A549 (cell line): ENCODE measurements at regions of chr11 and their contacts with region 1.

Region 1: GRCh38 chr11:118791111-118791965 is at the start of gene DDX6:
- DNase-seq: peak; percentile 62 to 81
- ATAC-seq: peak; percentile 79 to 81
- H3K4me3 ChIP-seq: peak within 1 kb of the TSS; percentile 69
- H3K27ac ChIP-seq: peak within 1 kb of the TSS; percentile 100
- H3K4me1 ChIP-seq: peaks cover 23% of the 10 kb centered on the region
- CTCF ChIP-seq: no peak; the same call in 2 of the 3 replicates
- EP300 ChIP-seq: no peak
- POLR2A ChIP-seq: peak; percentile 62
- RAD21 ChIP-seq: peak in 1 of 2 experiments; percentile 14; a peak in 1 of 5 replicates
- polyA plus RNA-seq, gene DDX6: 41.4 and 43.8 TPM in 2 replicates

Region 2: DNA sequence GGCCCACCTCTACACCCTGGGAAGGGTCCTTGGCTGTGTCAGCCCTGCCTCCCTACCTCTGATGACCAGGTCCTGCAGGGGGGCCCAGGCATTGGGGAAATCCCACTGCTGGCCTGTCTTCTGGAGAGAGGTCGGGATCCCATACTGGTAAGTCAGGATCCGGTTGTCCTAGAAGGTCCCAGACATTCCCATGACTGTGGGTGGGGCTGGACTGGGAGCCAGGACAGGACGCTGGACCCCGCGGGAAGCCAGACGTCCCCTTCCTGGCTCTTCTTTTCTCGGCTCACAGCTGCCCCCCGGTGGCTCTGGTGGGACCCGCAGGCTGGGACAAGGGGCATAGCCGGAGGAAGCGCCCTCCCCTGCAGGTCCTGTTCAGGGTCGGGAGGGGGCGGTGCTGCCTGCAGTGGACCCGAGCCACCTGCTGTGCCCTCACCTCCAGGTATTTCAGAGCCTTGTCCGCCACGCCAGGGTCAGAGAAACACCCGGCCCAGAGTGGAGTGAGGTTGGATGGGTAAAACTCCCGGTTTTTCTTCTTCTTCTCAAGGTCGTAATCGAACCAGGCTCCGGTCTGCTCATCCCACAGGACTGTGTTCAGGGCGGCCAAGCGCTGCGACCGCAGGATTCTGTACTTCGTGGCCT is 131.9 kb before region 1 on chr11:
- CTCF ChIA-PET with region 1: no interaction called
- POLR2A ChIA-PET with region 1: no interaction called
- DNase-seq: peak; percentile 75 to 87
- ATAC-seq: peak; percentile 85 to 94
- H3K4me3 ChIP-seq: no peak overlapping the region
- H3K27ac ChIP-seq: peak overlapping the region in 1 of 2 experiments; percentile 70; a peak in 2 of 6 replicates
- H3K4me1 ChIP-seq: peaks cover 4% of the 10 kb centered on the region; the same call in 1 of the 3 replicates
- CTCF ChIP-seq: peak; percentile 72
- EP300 ChIP-seq: no peak
- POLR2A ChIP-seq: no peak
- RAD21 ChIP-seq: peak; percentile 67 to 77

Region 3: DNA sequence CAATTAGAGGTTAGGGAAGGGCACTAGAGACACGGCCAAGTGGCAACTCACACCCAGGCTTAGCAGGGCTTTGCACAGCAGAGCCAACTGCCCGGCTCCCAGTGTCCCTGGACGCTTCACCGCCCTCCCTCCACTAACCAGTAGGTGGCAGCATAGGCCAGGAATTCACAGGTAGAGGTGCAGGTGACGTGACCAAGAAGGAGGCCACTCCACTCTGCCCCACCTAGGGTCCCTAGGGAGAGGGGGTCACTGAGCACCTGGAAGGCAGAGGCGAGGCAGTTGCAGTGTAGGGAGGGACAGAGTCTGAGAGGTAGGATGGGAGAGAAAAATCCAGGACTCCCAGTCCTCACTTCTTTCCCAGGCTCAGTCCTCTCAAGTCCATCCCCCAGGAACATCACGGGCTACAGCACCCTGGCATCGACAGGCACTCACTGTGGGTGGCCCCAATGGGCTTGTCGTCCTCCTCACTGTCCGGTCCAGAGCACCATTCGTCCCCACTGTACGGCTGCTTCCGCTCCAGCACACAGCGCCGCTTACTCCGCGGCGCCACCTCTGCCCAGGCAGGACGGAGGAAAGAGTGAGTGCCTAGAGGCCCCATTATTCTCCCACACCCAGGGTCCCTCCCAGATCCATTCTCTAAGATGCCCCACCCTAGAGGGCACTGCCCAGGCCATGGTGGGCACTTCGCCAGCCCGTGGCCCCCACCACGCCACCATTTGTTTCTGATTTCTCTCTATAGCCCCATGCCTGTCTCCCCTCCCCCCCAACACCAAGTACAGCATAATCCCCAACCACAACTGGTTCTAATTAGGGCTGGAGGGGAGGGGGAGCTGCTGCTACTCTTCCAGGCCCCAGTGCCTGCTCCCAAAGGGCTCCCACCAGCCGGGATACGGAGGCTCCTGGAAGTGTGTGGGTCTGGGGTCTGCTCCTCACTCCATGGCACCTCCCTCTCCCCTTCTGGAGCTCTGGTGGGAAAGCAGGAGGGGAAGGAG is 116.0 kb after region 1 on chr11:
- CTCF ChIA-PET with region 1: interaction called, 18 read pairs
- POLR2A ChIA-PET with region 1: interaction called, 10 read pairs
- DNase-seq: peak; percentile 47 to 82
- ATAC-seq: peak; percentile 22 to 46; a peak in 5 of 6 replicates
- H3K4me3 ChIP-seq: peak overlapping the region; percentile 52; the same call in 2 of the 3 replicates
- H3K27ac ChIP-seq: peak overlapping the region; percentile 98 to 100
- H3K4me1 ChIP-seq: peaks cover 60% of the 10 kb centered on the region
- CTCF ChIP-seq: peak; percentile 72
- EP300 ChIP-seq: no peak
- POLR2A ChIP-seq: no peak
- RAD21 ChIP-seq: peak; percentile 90 to 92